ENCODE measurements at regions of chr11 and their contacts with region 1.

Region 1: DNA sequence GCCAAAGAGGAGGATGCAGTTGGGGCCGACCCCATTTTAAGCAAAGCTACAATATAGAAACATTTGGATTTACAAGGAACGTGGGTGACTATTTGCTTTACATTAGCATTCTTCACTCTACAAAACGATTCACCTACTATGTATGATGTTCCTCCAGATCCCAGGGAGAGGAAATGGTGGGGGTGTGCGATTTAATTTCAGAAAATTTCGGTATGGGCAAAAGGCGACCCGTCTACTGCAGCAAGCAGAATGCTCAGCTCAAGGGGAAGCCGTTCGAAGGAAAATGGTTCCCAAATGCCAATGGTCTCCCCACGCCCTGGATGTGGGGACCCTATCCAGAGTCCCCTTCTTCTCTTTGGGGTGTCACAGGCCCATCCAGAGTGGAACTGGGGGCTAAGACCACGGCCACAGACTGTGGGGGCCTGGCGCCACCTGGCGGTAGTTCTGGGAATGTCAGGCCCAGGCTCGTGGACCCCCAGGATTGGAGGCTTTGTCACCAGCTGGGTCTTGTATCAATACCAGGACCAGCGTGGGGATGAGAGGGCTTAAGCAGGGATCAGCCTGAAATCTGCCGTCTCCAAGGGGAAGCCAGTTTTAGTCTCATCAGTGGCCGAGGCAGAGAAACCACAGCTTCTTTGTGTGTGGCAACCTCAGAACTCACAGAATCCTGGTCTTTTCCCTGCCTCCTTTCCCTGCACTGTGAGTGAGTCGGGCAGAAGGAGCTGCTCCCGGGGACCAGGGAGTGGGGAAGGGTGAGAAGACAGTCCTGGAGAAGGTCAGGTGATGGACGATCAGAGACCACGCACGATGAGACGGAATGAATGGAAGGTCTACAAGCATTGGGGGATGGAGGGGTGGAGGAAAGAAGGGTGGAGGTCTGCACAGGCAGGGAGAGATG is 8.4 kb downstream of the LRRC10B start:
- DNase-seq: peak; percentile 27 to 69 (median 47)
- ATAC-seq: peak; percentile 71
- H3K4me3 ChIP-seq: peak overlapping the region; percentile 2
- H3K4me3 Mint-ChIP-seq: peak overlapping the region; percentile 39
- H3K27ac ChIP-seq: no peak overlapping the region
- H3K27ac Mint-ChIP-seq: no peak overlapping the region
- H3K4me1 ChIP-seq: peaks cover 13% of the 10 kb centered on the region
- H3K4me1 Mint-ChIP-seq: peaks cover 9% of the 10 kb centered on the region
- H3K27me3 ChIP-seq: peaks cover 18% of the 10 kb centered on the region in 2 experiments
- H3K27me3 Mint-ChIP-seq: peaks cover 42% of the 10 kb centered on the region
- CTCF ChIP-seq: peak; percentile 99

Region 2: DNA sequence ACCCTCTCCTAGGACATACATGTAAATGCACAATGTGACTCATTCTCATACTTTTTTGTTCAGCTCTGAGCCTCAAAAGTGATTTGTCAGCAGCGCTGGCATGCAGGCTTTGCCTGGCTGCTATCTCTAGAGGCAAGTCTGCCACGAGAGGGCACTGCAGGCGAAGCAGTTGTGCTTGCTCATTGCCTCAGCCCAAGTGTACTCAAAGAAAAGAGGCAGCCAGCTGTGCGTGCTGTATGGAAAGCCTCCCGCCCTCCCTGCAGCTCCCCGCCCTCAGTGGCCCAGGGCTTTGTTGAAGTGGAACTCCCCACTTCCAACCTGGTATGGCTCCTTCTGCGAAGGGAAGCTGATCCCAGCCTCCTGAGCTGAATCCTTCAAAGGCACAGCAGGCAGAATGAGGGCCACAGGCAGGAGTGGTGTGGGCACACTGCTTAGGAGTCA is 70.7 kb before region 1 on chr11:
- CTCF ChIA-PET with region 1: interaction called, 4 read pairs
- POLR2A ChIA-PET with region 1: no interaction called
- intact Hi-C with region 1: loop called (anchors 1 kb)
- DNase-seq: peak; percentile 45 to 82 (median 64)
- ATAC-seq: peak; percentile 98
- H3K4me3 ChIP-seq: no peak overlapping the region
- H3K4me3 Mint-ChIP-seq: no peak overlapping the region
- H3K27ac ChIP-seq: no peak overlapping the region
- H3K27ac Mint-ChIP-seq: peak overlapping the region; percentile 54
- H3K4me1 ChIP-seq: peaks cover 6% of the 10 kb centered on the region
- H3K4me1 Mint-ChIP-seq: peaks cover 26% of the 10 kb centered on the region
- H3K27me3 ChIP-seq: no peaks in the 10 kb centered on the region
- H3K27me3 Mint-ChIP-seq: no peaks in the 10 kb centered on the region
- CTCF ChIP-seq: peak; percentile 68

Region 3: DNA sequence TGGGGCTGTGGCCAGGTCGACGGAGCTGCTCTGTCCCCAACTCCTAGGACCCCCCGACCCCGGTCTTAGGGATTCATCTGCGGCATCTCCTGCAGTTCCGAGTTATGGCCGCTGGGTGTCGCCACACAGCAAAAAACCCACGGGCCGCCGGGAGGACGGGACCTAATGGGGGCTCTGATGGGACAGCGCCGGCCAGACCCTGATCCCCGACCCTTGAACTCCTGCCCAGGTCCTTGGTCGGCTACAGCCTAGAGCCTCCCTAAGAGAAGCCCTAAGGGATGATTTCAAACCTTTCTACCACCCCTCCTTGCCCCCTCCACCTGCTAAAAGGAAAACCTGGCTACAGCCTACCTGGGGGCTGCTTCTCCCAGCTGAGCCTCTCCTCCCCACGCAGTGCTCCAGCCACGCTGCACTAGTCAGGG is 39.2 kb before region 1 on chr11:
- CTCF ChIA-PET with region 1: interaction called, 3 read pairs
- POLR2A ChIA-PET with region 1: no interaction called
- intact Hi-C with region 1: loop called (anchors 1 kb)
- DNase-seq: peak; percentile 29 to 71 (median 43)
- ATAC-seq: peak; percentile 39
- H3K4me3 ChIP-seq: no peak overlapping the region
- H3K4me3 Mint-ChIP-seq: no peak overlapping the region
- H3K27ac ChIP-seq: no peak overlapping the region
- H3K27ac Mint-ChIP-seq: no peak overlapping the region
- H3K4me1 ChIP-seq: peaks cover 9% of the 10 kb centered on the region
- H3K4me1 Mint-ChIP-seq: peaks cover 7% of the 10 kb centered on the region
- H3K27me3 ChIP-seq: peaks cover 0 to under 1% of the 10 kb centered on the region in 2 experiments
- H3K27me3 Mint-ChIP-seq: no peaks in the 10 kb centered on the region
- CTCF ChIP-seq: peak; percentile 96

Region 4: GRCh38 chr11:62370743-62371440 is 854.0 kb after region 1 on chr11:
- CTCF ChIA-PET with region 1: no interaction called
- POLR2A ChIA-PET with region 1: no interaction called
- intact Hi-C with region 1: no loop called
- DNase-seq: peak in 10 of 14 experiments; percentile 19 to 75 (median 47)
- ATAC-seq: peak; percentile 93
- H3K4me3 ChIP-seq: peak overlapping the region; percentile 14
- H3K4me3 Mint-ChIP-seq: peak overlapping the region; percentile 76
- H3K27ac ChIP-seq: no peak overlapping the region
- H3K27ac Mint-ChIP-seq: peak overlapping the region; percentile 70
- H3K4me1 ChIP-seq: peaks cover 21% of the 10 kb centered on the region
- H3K4me1 Mint-ChIP-seq: peaks cover 17% of the 10 kb centered on the region
- H3K27me3 ChIP-seq: no peaks in the 10 kb centered on the region
- H3K27me3 Mint-ChIP-seq: no peaks in the 10 kb centered on the region
- CTCF ChIP-seq: no peak